ENCODE measurements at regions of chr1 and their contacts with region 1.

Region 1: GRCh38 chr1:35451125-35451528 is 106.1 kb downstream of the KIAA0319L start:
- DNase-seq: peak; percentile 62 to 85 (median 79)
- ATAC-seq: peak; percentile 94
- H3K4me3 ChIP-seq: no peak overlapping the region
- H3K4me3 Mint-ChIP-seq: no peak overlapping the region
- H3K27ac ChIP-seq: no peak overlapping the region
- H3K27ac Mint-ChIP-seq: peak overlapping the region; percentile 85
- H3K4me1 ChIP-seq: peaks cover 14% of the 10 kb centered on the region
- H3K4me1 Mint-ChIP-seq: peaks cover 27% of the 10 kb centered on the region
- H3K27me3 ChIP-seq: no peaks in the 10 kb centered on the region
- H3K27me3 Mint-ChIP-seq: no peaks in the 10 kb centered on the region
- CTCF ChIP-seq: peak; percentile 82

Region 2: GRCh38 chr1:35367915-35368314 is 83.2 kb before region 1 on chr1:
- CTCF ChIA-PET with region 1: no interaction called
- POLR2A ChIA-PET with region 1: no interaction called
- intact Hi-C with region 1: no loop called
- DNase-seq: no peak
- ATAC-seq: no peak
- H3K4me3 ChIP-seq: no peak overlapping the region
- H3K4me3 Mint-ChIP-seq: no peak overlapping the region
- H3K27ac ChIP-seq: no peak overlapping the region
- H3K27ac Mint-ChIP-seq: no peak overlapping the region
- H3K4me1 ChIP-seq: no peaks in the 10 kb centered on the region
- H3K4me1 Mint-ChIP-seq: no peaks in the 10 kb centered on the region
- H3K27me3 ChIP-seq: no peaks in the 10 kb centered on the region
- H3K27me3 Mint-ChIP-seq: no peaks in the 10 kb centered on the region
- CTCF ChIP-seq: no peak

Region 3: GRCh38 chr1:35431173-35431599 is 19.9 kb before region 1 on chr1:
- CTCF ChIA-PET with region 1: interaction called, 18 read pairs
- POLR2A ChIA-PET with region 1: no interaction called
- intact Hi-C with region 1: no loop called
- DNase-seq: no peak
- ATAC-seq: no peak
- H3K4me3 ChIP-seq: no peak overlapping the region
- H3K4me3 Mint-ChIP-seq: no peak overlapping the region
- H3K27ac ChIP-seq: no peak overlapping the region
- H3K27ac Mint-ChIP-seq: peak overlapping the region; percentile 16
- H3K4me1 ChIP-seq: no peaks in the 10 kb centered on the region
- H3K4me1 Mint-ChIP-seq: peaks cover 4% of the 10 kb centered on the region
- H3K27me3 ChIP-seq: no peaks in the 10 kb centered on the region
- H3K27me3 Mint-ChIP-seq: no peaks in the 10 kb centered on the region
- CTCF ChIP-seq: no peak

Region 4: DNA sequence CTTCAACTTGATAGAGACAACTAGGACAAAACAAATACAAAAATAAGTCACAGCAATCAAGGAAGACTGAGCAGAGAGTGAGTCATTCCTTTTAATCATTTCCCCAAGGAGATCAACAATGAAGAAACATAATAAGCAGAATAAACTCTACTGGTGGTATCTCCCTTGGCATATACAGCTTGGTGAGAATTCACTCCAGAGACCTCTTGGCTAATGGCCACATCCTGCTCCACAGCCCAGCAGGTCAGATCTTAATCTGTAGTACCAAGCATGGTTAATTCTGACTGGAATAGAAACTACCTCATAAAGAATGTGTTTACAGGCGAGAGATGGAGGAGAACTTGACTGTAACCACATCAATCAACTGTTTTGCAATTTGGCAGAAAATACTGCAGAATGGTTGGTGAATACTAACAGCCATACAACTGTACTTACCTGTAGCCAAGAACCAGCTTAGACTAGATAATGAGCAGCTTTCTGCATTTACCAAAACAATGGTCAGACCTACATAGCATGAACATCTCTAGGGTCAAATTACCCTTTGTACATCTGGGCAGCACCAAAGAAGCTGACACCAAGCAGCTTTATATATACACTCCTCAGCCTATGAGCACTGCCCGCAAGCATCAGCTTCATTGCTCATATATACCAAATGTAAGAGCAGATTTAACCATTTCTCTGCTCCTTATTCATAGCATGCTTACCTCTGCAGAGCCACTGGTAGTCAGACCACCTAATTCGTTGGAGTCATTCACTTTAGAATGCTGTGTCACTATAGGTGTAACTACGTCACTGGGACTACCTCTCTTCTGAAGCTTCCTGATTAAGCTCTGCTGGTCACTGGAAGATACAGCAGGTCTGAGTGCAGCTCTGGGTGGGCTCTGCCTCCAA is 55.0 kb after region 1 on chr1:
- CTCF ChIA-PET with region 1: interaction called, 29 read pairs
- POLR2A ChIA-PET with region 1: interaction called, 4 read pairs
- intact Hi-C with region 1: loop called (anchors 2 to 5 kb)
- DNase-seq: peak in 7 of 9 experiments; percentile 21 to 77 (median 61)
- ATAC-seq: peak; percentile 71
- H3K4me3 ChIP-seq: no peak overlapping the region
- H3K4me3 Mint-ChIP-seq: peak overlapping the region; percentile 69
- H3K27ac ChIP-seq: peak overlapping the region; percentile 17 to 58
- H3K27ac Mint-ChIP-seq: peak overlapping the region; percentile 95
- H3K4me1 ChIP-seq: peaks cover 33% of the 10 kb centered on the region
- H3K4me1 Mint-ChIP-seq: peaks cover 71% of the 10 kb centered on the region
- H3K27me3 ChIP-seq: no peaks in the 10 kb centered on the region
- H3K27me3 Mint-ChIP-seq: no peaks in the 10 kb centered on the region
- CTCF ChIP-seq: no peak

Region 5: DNA sequence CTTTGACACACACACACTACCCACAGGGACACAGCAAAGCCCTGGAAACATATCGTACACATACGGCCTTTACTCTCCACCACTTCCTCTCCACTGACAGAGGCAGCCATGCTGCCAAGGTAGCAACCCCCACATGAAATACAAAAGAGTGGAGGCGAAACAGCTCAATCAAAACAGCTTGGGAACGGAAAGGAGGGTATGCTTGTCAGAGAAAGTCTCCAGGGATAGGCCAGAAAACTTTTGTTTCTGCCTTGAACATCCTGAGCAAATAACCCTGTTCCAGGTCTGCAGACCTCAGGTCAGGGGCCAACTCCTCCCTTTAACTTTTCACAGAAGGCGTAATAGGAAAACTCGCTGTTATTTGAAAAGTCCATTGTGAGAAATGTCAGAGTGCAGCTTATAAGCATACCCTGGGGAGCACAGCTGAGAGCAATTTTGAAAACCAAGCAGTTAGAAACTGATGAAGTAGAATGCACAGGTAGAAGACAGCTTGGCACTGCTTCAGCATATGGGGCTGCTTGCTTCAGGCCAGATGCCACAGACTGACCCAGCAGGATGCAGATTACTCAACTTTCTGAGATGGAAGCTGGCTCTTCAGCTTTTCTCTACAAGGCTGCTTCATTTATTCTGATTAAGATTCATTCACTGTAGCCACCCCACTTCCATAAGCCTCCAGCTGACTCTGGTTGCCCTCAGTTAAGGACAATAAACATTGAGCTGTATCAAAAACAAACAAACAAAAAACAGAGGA is 88.1 kb after region 1 on chr1:
- CTCF ChIA-PET with region 1: interaction called, 116 read pairs
- POLR2A ChIA-PET with region 1: interaction called, 6 read pairs
- intact Hi-C with region 1: no loop called
- DNase-seq: peak in 6 of 9 experiments; percentile 39 to 75 (median 62)
- ATAC-seq: peak; percentile 87
- H3K4me3 ChIP-seq: peak overlapping the region in 1 of 2 experiments; percentile 42
- H3K4me3 Mint-ChIP-seq: peak overlapping the region; percentile 73
- H3K27ac ChIP-seq: peak overlapping the region; percentile 63 to 73
- H3K27ac Mint-ChIP-seq: peak overlapping the region; percentile 94
- H3K4me1 ChIP-seq: peaks cover 76% of the 10 kb centered on the region
- H3K4me1 Mint-ChIP-seq: peaks cover 87% of the 10 kb centered on the region
- H3K27me3 ChIP-seq: no peaks in the 10 kb centered on the region
- H3K27me3 Mint-ChIP-seq: no peaks in the 10 kb centered on the region
- CTCF ChIP-seq: no peak

Region 6: GRCh38 chr1:35569936-35570335 is 118.8 kb after region 1 on chr1:
- CTCF ChIA-PET with region 1: interaction called, 144 read pairs
- POLR2A ChIA-PET with region 1: interaction called, 6 read pairs
- intact Hi-C with region 1: no loop called
- DNase-seq: no peak
- ATAC-seq: no peak
- H3K4me3 ChIP-seq: no peak overlapping the region
- H3K4me3 Mint-ChIP-seq: no peak overlapping the region
- H3K27ac ChIP-seq: no peak overlapping the region
- H3K27ac Mint-ChIP-seq: no peak overlapping the region
- H3K4me1 ChIP-seq: no peaks in the 10 kb centered on the region
- H3K4me1 Mint-ChIP-seq: peaks cover 9% of the 10 kb centered on the region
- H3K27me3 ChIP-seq: no peaks in the 10 kb centered on the region
- H3K27me3 Mint-ChIP-seq: no peaks in the 10 kb centered on the region
- CTCF ChIP-seq: no peak

Region 7: GRCh38 chr1:35683012-35683411 is 231.9 kb after region 1 on chr1:
- CTCF ChIA-PET with region 1: no interaction called
- POLR2A ChIA-PET with region 1: no interaction called
- intact Hi-C with region 1: no loop called
- DNase-seq: no peak
- ATAC-seq: no peak
- H3K4me3 ChIP-seq: no peak overlapping the region
- H3K4me3 Mint-ChIP-seq: no peak overlapping the region
- H3K27ac ChIP-seq: no peak overlapping the region
- H3K27ac Mint-ChIP-seq: no peak overlapping the region
- H3K4me1 ChIP-seq: no peaks in the 10 kb centered on the region
- H3K4me1 Mint-ChIP-seq: no peaks in the 10 kb centered on the region
- H3K27me3 ChIP-seq: no peaks in the 10 kb centered on the region
- H3K27me3 Mint-ChIP-seq: peaks cover 20% of the 10 kb centered on the region
- CTCF ChIP-seq: no peak

Region 8: GRCh38 chr1:35769759-35770446 is 318.8 kb after region 1 on chr1 and contains the start of gene CLSPN:
- CTCF ChIA-PET with region 1: interaction called, 16 read pairs
- POLR2A ChIA-PET with region 1: no interaction called
- intact Hi-C with region 1: loop called (anchors 1 to 2 kb)
- DNase-seq: peak; percentile 86 to 96 (median 93)
- ATAC-seq: peak; percentile 94
- H3K4me3 ChIP-seq: peak within 1 kb of the TSS; percentile 90 to 97
- H3K4me3 Mint-ChIP-seq: peak within 1 kb of the TSS; percentile 99
- H3K27ac ChIP-seq: peak within 1 kb of the TSS; percentile 61 to 81
- H3K27ac Mint-ChIP-seq: peak within 1 kb of the TSS; percentile 92
- H3K4me1 ChIP-seq: peaks cover 5% of the 10 kb centered on the region
- H3K4me1 Mint-ChIP-seq: peaks cover 8% of the 10 kb centered on the region
- H3K27me3 ChIP-seq: no peaks in the 10 kb centered on the region
- H3K27me3 Mint-ChIP-seq: no peaks in the 10 kb centered on the region
- CTCF ChIP-seq: no peak
- total RNA-seq, gene CLSPN: 0.41 to 0.81 TPM

Measured in CD8-positive, alpha-beta T cell (primary cell).